ENCODE measurements at regions of chr10 and their contacts with region 1.

Region 1: GRCh38 chr10:114876602-114877300 is 55.2 kb downstream of the FHIP2A start:
- DNase-seq: peak; percentile 34 to 60
- H3K4me3 ChIP-seq: no peak overlapping the region
- H3K27ac ChIP-seq: no peak overlapping the region
- H3K4me1 ChIP-seq: no peaks in the 10 kb centered on the region
- H3K27me3 ChIP-seq: no peaks in the 10 kb centered on the region
- CTCF ChIP-seq: peak; percentile 68

Region 2: DNA sequence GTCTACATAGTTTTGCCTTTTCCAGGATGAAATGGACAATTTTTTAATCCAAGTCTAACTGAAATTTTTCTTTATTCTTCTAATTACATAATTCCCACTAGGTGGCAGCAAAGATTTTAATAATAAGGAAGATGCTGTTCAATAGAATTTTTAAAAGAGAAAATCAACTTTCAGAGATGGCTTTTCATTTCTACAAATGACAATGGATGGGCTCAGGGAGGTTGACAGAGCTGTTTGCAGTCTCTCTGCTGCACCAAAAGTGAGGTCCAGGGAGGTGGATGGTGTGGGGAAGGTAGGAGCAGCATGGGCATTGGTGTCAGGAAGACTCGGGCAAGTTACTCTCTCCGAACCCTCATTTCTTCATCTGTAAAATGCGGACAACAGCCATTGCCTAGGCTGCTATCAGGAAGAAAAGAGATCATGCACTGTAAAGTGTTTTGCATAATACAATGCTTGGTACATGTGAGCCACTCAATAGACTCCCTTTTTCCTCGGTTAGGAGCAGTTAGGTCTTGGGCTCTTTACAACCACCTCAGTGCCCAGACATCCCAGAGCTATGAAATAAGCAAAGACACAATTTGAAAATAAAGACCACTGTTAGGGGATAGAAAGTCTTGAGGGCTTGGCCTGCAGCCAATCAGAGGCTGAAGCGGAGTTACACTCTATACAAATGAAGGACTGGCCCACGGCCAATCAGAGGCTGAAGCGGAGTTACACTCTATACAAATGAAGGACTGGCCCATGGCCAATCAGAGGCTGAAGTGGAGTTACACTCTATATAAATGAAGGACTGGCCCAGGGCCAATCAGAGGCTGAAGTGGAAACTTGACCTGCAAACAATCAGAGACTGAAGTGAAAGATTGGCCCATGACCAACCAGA is 325.8 kb before region 1 on chr10:
- CTCF ChIA-PET with region 1: no interaction called
- POLR2A ChIA-PET with region 1: no interaction called
- intact Hi-C with region 1: loop called (anchors 5 kb)
- DNase-seq: peak in 1 of 2 experiments; percentile 40
- H3K4me3 ChIP-seq: no peak overlapping the region
- H3K27ac ChIP-seq: no peak overlapping the region
- H3K4me1 ChIP-seq: no peaks in the 10 kb centered on the region
- H3K27me3 ChIP-seq: no peaks in the 10 kb centered on the region
- CTCF ChIP-seq: peak; percentile 74

Region 3: GRCh38 chr10:114703377-114704107 is 173.2 kb before region 1 on chr10:
- CTCF ChIA-PET with region 1: interaction called, 11 read pairs
- POLR2A ChIA-PET with region 1: no interaction called
- intact Hi-C with region 1: no loop called
- DNase-seq: no peak
- H3K4me3 ChIP-seq: no peak overlapping the region
- H3K27ac ChIP-seq: no peak overlapping the region
- H3K4me1 ChIP-seq: peaks cover 24% of the 10 kb centered on the region
- H3K27me3 ChIP-seq: no peaks in the 10 kb centered on the region
- CTCF ChIP-seq: peak; percentile 67

Region 4: GRCh38 chr10:115129752-115130151 is 253.0 kb after region 1 on chr10:
- CTCF ChIA-PET with region 1: no interaction called
- POLR2A ChIA-PET with region 1: no interaction called
- intact Hi-C with region 1: loop called (anchors 1 kb)
- DNase-seq: no peak
- H3K4me3 ChIP-seq: no peak overlapping the region
- H3K27ac ChIP-seq: no peak overlapping the region
- H3K4me1 ChIP-seq: no peaks in the 10 kb centered on the region
- H3K27me3 ChIP-seq: no peaks in the 10 kb centered on the region
- CTCF ChIP-seq: peak; percentile 50

Region 5: GRCh38 chr10:115572706-115573455 is 696.1 kb after region 1 on chr10:
- CTCF ChIA-PET with region 1: no interaction called
- POLR2A ChIA-PET with region 1: no interaction called
- intact Hi-C with region 1: loop called (anchors 10 kb)
- DNase-seq: no peak
- H3K4me3 ChIP-seq: no peak overlapping the region
- H3K27ac ChIP-seq: no peak overlapping the region
- H3K4me1 ChIP-seq: no peaks in the 10 kb centered on the region
- H3K27me3 ChIP-seq: no peaks in the 10 kb centered on the region
- CTCF ChIP-seq: peak; percentile 32; the same call in 1 of the 2 replicates

Measured in PC-9 (cell line).